ENCODE measurements at regions of chrX and their contacts with region 1.

Region 1: DNA sequence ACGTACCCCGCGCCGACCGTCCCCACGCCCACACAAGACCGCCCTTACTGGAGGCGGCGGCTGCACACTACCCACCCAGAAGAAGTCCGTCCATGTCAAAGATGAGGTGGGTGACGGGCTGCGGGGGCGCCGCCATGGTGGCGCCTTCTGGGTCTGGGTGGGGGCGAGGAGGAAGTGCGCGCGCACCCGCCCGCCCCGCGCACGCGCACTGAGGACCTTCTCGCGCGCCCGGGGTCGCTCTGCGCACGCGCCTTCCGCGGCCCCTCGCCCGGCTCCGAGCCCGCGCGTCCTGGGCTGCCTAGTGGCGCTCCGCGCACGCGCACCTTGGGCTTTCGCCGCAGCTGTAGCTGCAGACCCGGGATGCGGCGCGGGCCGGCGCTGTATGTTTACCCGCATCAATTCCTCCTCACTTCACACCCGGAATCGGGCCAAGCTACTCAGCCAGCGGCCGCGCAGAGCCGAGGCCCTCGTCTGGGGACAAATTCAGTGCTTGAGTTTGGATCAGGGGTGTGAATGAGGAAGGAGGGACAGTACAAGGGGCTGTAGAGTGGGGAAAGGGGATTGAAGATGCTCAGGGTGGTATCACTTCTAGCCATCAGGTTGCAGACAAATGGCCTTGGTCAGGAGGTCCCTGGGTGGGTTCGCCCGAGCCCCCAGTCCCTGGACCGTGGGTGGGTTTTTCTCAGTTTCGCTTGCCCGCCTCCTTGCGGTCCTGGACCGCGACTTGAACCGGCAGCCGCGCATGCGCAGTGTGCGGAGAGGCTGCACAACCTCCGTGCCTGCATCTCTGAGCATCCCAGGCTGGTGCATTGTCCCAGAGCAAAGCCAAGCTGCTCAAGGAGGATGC is at the start of gene PUDP:
- DNase-seq: peak; percentile 95
- H3K4me3 Mint-ChIP-seq: peak within 1 kb of the TSS; percentile 85
- H3K27ac Mint-ChIP-seq: peak within 1 kb of the TSS; percentile 85
- H3K4me1 Mint-ChIP-seq: peaks cover 11% of the 10 kb centered on the region
- H3K27me3 Mint-ChIP-seq: no peaks in the 10 kb centered on the region
- total RNA-seq, gene PUDP: 17.4 and 19.5 TPM in 2 replicates

Region 2: GRCh38 chrX:7059214-7059838 is 88.9 kb before region 1 on chrX:
- intact Hi-C with region 1: loop called (anchors 2 kb)
- DNase-seq: peak; percentile 62
- H3K4me3 Mint-ChIP-seq: no peak overlapping the region
- H3K27ac Mint-ChIP-seq: no peak overlapping the region
- H3K4me1 Mint-ChIP-seq: peaks cover 18% of the 10 kb centered on the region
- H3K27me3 Mint-ChIP-seq: no peaks in the 10 kb centered on the region

Region 3: GRCh38 chrX:7083468-7084396 is 64.5 kb before region 1 on chrX:
- intact Hi-C with region 1: loop called (anchors 2 kb)
- DNase-seq: peak; percentile 88
- H3K4me3 Mint-ChIP-seq: peak overlapping the region; percentile 56
- H3K27ac Mint-ChIP-seq: peak overlapping the region; percentile 89
- H3K4me1 Mint-ChIP-seq: peaks cover 31% of the 10 kb centered on the region
- H3K27me3 Mint-ChIP-seq: peaks cover 5% of the 10 kb centered on the region

Region 4: DNA sequence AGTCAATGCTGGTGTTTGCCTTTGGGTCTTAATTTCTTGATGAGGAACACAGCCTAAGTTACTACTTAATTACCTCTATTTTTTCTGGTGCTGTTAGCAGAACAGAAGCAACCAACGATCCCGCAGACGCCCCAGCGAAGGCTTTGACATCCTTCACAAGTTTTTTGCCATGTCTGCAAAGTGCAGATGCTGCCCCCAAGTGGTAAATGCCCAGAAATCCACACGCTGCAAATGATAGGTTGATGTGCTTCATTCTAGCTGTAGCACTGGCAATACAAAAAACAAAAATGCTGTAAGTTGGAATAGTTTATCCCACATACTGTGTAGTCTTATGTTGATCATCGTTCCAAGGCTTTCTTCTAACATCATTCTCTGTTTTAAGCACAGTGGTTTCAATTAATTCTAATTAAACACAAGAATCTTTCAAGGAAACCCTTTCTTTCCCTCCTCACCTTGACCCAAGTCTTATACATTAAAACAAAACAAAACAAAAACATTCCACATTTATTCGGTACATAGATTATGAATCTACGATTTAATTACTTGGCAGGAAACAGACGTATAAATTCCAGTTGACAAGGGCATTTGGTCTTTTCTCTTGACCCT is 777.8 kb after region 1 on chrX:
- intact Hi-C with region 1: loop called (anchors 5 kb)
- DNase-seq: peak; percentile 86
- H3K4me3 Mint-ChIP-seq: peak overlapping the region; percentile 34
- H3K27ac Mint-ChIP-seq: peak overlapping the region; percentile 20
- H3K4me1 Mint-ChIP-seq: peaks cover 5% of the 10 kb centered on the region
- H3K27me3 Mint-ChIP-seq: no peaks in the 10 kb centered on the region